ENCODE measurements at regions of chr1 and their contacts with region 1.

Region 1: DNA sequence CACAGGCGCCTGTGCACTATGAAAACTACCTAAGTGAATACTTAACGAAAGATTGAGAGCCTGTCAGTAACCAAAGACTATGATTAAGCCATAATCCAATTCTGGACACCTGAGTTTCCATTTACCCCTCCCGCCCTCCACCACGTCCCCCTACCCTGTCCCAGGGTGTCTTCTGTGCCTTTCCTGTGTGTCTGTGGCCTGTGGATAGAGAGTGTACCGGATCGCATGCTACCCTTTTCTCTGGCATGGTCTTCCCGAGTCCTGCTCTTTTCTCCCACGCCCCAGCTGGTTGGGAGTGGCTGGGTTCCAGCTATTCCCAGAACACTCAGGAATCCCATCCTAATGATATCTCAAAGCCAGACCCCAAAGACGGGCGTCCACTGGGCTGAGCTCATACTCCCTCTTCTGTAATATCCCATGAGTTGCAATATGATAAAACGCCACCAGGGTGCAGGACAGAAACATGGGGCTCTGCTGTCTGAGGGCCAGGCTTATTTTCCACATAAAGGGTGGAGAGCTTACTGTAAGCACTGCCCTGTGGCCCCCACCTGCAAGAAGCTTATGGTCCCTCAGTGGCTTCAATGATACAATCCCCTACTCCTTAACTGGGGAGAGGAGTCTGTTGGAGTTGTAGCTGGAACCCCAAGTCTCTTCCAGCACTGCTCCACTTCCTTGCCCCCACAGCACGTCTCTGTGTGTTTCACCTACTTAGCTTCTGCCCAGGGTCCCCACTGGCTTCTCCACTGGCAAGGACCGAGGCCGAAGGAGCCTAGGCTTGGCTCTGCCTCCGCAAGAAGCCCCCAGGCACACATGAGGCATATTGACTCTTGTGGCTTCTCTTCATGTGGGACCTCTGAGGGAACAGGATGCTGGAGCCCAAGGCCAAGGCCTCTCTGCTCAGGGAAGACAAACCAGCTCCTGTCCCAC is 17.6 kb upstream of the ALX3 start:
- DNase-seq: no peak
- H3K4me3 ChIP-seq: no peak overlapping the region
- H3K27ac ChIP-seq: no peak overlapping the region
- H3K4me1 ChIP-seq: no peaks in the 10 kb centered on the region
- H3K27me3 ChIP-seq: no peaks in the 10 kb centered on the region
- CTCF ChIP-seq: peak; percentile 44 to 68 (median 66)

Region 2: GRCh38 chr1:109959974-109960744 is 127.9 kb before region 1 on chr1:
- intact Hi-C with region 1: no loop called
- DNase-seq: no peak
- H3K4me3 ChIP-seq: no peak overlapping the region
- H3K27ac ChIP-seq: peak overlapping the region in 1 of 2 donors; percentile 31
- H3K4me1 ChIP-seq: peaks cover 5 to 7% of the 10 kb centered on the region in 2 donors
- H3K27me3 ChIP-seq: no peaks in the 10 kb centered on the region
- CTCF ChIP-seq: no peak

Region 3: GRCh38 chr1:110188035-110188618 is 100.1 kb after region 1 on chr1:
- intact Hi-C with region 1: loop called (anchors 5 kb)
- DNase-seq: no peak
- H3K4me3 ChIP-seq: peak overlapping the region in 1 of 2 donors; percentile 4
- H3K27ac ChIP-seq: peak overlapping the region; percentile 90 to 92
- H3K4me1 ChIP-seq: peaks cover 10 to 34% of the 10 kb centered on the region in 2 donors
- H3K27me3 ChIP-seq: no peaks in the 10 kb centered on the region
- CTCF ChIP-seq: no peak

Region 4: GRCh38 chr1:110328274-110328673 is 240.2 kb after region 1 on chr1:
- intact Hi-C with region 1: no loop called
- DNase-seq: no peak
- H3K4me3 ChIP-seq: no peak overlapping the region
- H3K27ac ChIP-seq: no peak overlapping the region
- H3K4me1 ChIP-seq: no peaks in the 10 kb centered on the region
- H3K27me3 ChIP-seq: no peaks in the 10 kb centered on the region
- CTCF ChIP-seq: no peak

Measured in ascending aorta (tissue), 2 donors.